ENCODE measurements at regions of chr3 and their contacts with region 1.

Region 1: DNA sequence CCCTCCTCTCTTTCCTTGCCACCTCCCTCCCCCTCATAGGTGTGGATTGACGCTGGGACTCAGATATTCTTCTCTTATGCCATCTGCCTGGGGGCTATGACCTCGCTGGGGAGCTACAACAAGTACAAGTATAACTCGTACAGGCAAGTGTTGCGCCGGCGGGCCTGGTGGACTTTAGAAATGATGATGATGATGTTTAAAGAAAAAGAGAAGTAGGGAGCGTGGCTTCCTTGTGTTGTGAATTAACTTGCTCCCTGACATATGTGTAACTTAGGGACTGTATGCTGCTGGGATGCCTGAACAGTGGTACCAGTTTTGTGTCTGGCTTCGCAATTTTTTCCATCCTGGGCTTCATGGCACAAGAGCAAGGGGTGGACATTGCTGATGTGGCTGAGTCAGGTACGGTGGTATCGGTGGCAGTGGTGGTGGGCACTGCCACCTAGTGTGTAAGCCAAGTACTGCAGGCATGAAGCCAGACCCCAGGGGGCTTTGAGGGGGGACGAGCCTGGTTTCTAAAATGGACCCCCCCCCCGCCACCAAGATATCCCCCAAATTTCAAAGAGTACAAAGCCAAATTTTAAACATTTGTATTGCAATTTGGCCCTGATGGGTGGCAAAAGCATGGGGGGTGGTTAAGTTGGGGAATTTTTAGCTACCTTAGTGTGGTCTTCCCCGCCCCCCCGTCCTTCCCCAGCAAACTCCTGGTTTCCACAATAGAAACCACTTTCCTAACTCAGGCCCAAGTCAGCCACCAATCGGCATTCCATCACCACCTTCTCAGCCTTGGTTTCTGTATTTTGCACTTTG is 65.6 kb downstream of the SLC6A6 start:
- DNase-seq: peak; percentile 71
- ATAC-seq: peak; percentile 90
- H3K4me3 ChIP-seq: no peak overlapping the region
- H3K4me3 Mint-ChIP-seq: no peak overlapping the region
- H3K27ac ChIP-seq: no peak overlapping the region
- H3K27ac Mint-ChIP-seq: no peak overlapping the region
- H3K4me1 ChIP-seq: no peaks in the 10 kb centered on the region
- H3K4me1 Mint-ChIP-seq: peaks cover 2% of the 10 kb centered on the region
- H3K27me3 ChIP-seq: no peaks in the 10 kb centered on the region
- H3K27me3 Mint-ChIP-seq: no peaks in the 10 kb centered on the region
- CTCF ChIP-seq: peak; percentile 89

Region 2: GRCh38 chr3:14203521-14204079 is 264.4 kb before region 1 on chr3:
- CTCF ChIA-PET with region 1: interaction called, 52 read pairs
- POLR2A ChIA-PET with region 1: no interaction called
- intact Hi-C with region 1: loop called (anchors 1 kb)
- DNase-seq: peak; percentile 61
- ATAC-seq: no peak
- H3K4me3 ChIP-seq: no peak overlapping the region
- H3K4me3 Mint-ChIP-seq: no peak overlapping the region
- H3K27ac ChIP-seq: no peak overlapping the region
- H3K27ac Mint-ChIP-seq: no peak overlapping the region
- H3K4me1 ChIP-seq: no peaks in the 10 kb centered on the region
- H3K4me1 Mint-ChIP-seq: peaks cover 2% of the 10 kb centered on the region
- H3K27me3 ChIP-seq: no peaks in the 10 kb centered on the region
- H3K27me3 Mint-ChIP-seq: no peaks in the 10 kb centered on the region
- CTCF ChIP-seq: peak; percentile 87

Region 3: GRCh38 chr3:14402304-14402811 is 65.7 kb before region 1 on chr3 and contains the start of gene SLC6A6:
- CTCF ChIA-PET with region 1: interaction called, 40 read pairs
- POLR2A ChIA-PET with region 1: no interaction called
- intact Hi-C with region 1: loop called (anchors 1 kb)
- DNase-seq: peak; percentile 97
- ATAC-seq: peak; percentile 80
- H3K4me3 ChIP-seq: peak within 1 kb of the TSS; percentile 53 to 87 (median 85)
- H3K4me3 Mint-ChIP-seq: peak within 1 kb of the TSS; percentile 99
- H3K27ac ChIP-seq: peak within 1 kb of the TSS; percentile 81 to 89
- H3K27ac Mint-ChIP-seq: peak within 1 kb of the TSS; percentile 98
- H3K4me1 ChIP-seq: peaks cover 39 to 55% of the 10 kb centered on the region in 2 donors
- H3K4me1 Mint-ChIP-seq: peaks cover 60% of the 10 kb centered on the region
- H3K27me3 ChIP-seq: no peaks in the 10 kb centered on the region
- H3K27me3 Mint-ChIP-seq: no peaks in the 10 kb centered on the region
- CTCF ChIP-seq: peak; percentile 67
- total RNA-seq, gene SLC6A6: 48.7 and 50.1 TPM in 2 replicates

Region 4: GRCh38 chr3:14431892-14432834 is 35.9 kb before region 1 on chr3:
- CTCF ChIA-PET with region 1: interaction called, 20 read pairs
- POLR2A ChIA-PET with region 1: interaction called, 3 read pairs
- intact Hi-C with region 1: loop called (anchors 1 kb)
- DNase-seq: peak; percentile 94
- ATAC-seq: peak; percentile 78
- H3K4me3 ChIP-seq: peak overlapping the region in 4 of 5 experiments; percentile 5 to 59 (median 34)
- H3K4me3 Mint-ChIP-seq: peak overlapping the region; percentile 80
- H3K27ac ChIP-seq: peak overlapping the region; percentile 93 to 98
- H3K27ac Mint-ChIP-seq: peak overlapping the region; percentile 94
- H3K4me1 ChIP-seq: peaks cover 75 to 89% of the 10 kb centered on the region in 2 donors
- H3K4me1 Mint-ChIP-seq: peaks cover 88% of the 10 kb centered on the region
- H3K27me3 ChIP-seq: no peaks in the 10 kb centered on the region
- H3K27me3 Mint-ChIP-seq: no peaks in the 10 kb centered on the region
- CTCF ChIP-seq: no peak

Region 5: GRCh38 chr3:14439579-14440518 is 28.2 kb before region 1 on chr3:
- CTCF ChIA-PET with region 1: interaction called, 11 read pairs
- POLR2A ChIA-PET with region 1: interaction called, 3 read pairs
- intact Hi-C with region 1: no loop called
- DNase-seq: no peak
- ATAC-seq: peak; percentile 58
- H3K4me3 ChIP-seq: no peak overlapping the region
- H3K4me3 Mint-ChIP-seq: peak overlapping the region; percentile 62
- H3K27ac ChIP-seq: no peak overlapping the region
- H3K27ac Mint-ChIP-seq: peak overlapping the region; percentile 63
- H3K4me1 ChIP-seq: peaks cover 17 to 37% of the 10 kb centered on the region in 2 donors
- H3K4me1 Mint-ChIP-seq: peaks cover 41% of the 10 kb centered on the region
- H3K27me3 ChIP-seq: no peaks in the 10 kb centered on the region
- H3K27me3 Mint-ChIP-seq: no peaks in the 10 kb centered on the region
- CTCF ChIP-seq: no peak

Region 6: DNA sequence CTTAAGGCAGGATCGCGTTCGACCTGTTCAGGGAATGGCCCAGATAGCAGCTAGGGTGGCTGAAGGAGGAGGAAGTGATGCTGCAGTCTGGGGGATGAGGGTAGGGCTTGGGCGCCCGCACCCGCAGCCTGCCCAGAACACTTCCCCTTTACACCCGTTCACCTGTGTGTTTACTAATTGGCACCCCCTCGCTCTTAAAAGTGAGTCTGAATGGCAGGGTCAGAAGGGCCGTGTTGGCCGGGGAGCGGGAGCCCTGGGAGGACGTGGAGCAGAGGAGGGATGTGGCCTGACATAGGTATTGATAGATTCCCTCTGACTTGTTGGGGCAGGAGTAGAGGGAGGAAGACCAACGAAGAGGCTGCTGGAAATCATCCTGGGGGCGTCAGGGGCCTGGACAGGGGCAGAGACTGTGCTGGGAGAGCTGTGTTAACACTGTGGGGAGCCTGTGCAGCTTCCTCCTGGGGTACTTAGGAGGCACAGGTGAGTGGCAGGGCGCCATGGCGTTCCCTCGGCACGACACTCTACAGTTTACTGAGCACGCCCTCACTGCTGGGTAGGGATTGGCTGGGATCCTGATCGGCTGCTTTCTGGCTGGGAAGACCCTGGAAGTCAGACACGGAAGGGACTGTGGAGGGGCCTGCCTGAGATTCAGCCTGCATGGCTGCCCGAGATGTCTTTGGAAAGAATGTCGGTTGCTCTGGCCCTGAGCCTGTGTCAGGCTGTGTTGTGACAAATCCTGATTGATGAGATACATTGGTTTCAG is 14.0 kb before region 1 on chr3:
- CTCF ChIA-PET with region 1: interaction called, 13 read pairs
- POLR2A ChIA-PET with region 1: no interaction called
- intact Hi-C with region 1: no loop called
- DNase-seq: no peak
- ATAC-seq: peak; percentile 92
- H3K4me3 ChIP-seq: no peak overlapping the region
- H3K4me3 Mint-ChIP-seq: peak overlapping the region; percentile 44
- H3K27ac ChIP-seq: peak overlapping the region in 1 of 2 donors; percentile 32
- H3K27ac Mint-ChIP-seq: peak overlapping the region; percentile 88
- H3K4me1 ChIP-seq: no peaks in the 10 kb centered on the region
- H3K4me1 Mint-ChIP-seq: peaks cover 14% of the 10 kb centered on the region
- H3K27me3 ChIP-seq: no peaks in the 10 kb centered on the region
- H3K27me3 Mint-ChIP-seq: no peaks in the 10 kb centered on the region
- CTCF ChIP-seq: no peak